ENCODE measurements at regions of chr12 and their contacts with region 1.

Region 1: GRCh38 chr12:49069507-49070346 is at the start of gene RHEBL1:
- DNase-seq: peak; percentile 98 to 99 (median 99)
- H3K4me3 ChIP-seq: peak within 1 kb of the TSS; percentile 93
- H3K4me3 Mint-ChIP-seq: peak within 1 kb of the TSS; percentile 87 to 98 (median 94)
- H3K27ac ChIP-seq: peak within 1 kb of the TSS; percentile 83
- H3K27ac Mint-ChIP-seq: peak within 1 kb of the TSS; percentile 72 to 99 (median 91)
- H3K4me1 ChIP-seq: peaks cover 16% of the 10 kb centered on the region
- H3K4me1 Mint-ChIP-seq: peaks cover 18 to 21% (median 21%) of the 10 kb centered on the region in 3 donors
- H3K27me3 ChIP-seq: no peaks in the 10 kb centered on the region
- H3K27me3 Mint-ChIP-seq: no peaks in the 10 kb centered on the region
- total RNA-seq, gene RHEBL1: 10.1 to 10.2 TPM

Region 2: GRCh38 chr12:48640854-48641253 is 428.9 kb before region 1 on chr12:
- CTCF ChIA-PET with region 1: no interaction called
- POLR2A ChIA-PET with region 1: no interaction called
- DNase-seq: no peak
- H3K4me3 ChIP-seq: no peak overlapping the region
- H3K4me3 Mint-ChIP-seq: no peak overlapping the region
- H3K27ac ChIP-seq: no peak overlapping the region
- H3K27ac Mint-ChIP-seq: no peak overlapping the region
- H3K4me1 ChIP-seq: no peaks in the 10 kb centered on the region
- H3K4me1 Mint-ChIP-seq: no peaks in the 10 kb centered on the region
- H3K27me3 ChIP-seq: no peaks in the 10 kb centered on the region
- H3K27me3 Mint-ChIP-seq: no peaks in the 10 kb centered on the region

Region 3: GRCh38 chr12:49098035-49098451 is 28.3 kb after region 1 on chr12:
- CTCF ChIA-PET with region 1: interaction called, 62 read pairs
- POLR2A ChIA-PET with region 1: interaction called, 12 read pairs
- DNase-seq: peak; percentile 43 to 75 (median 50)
- H3K4me3 ChIP-seq: no peak overlapping the region
- H3K4me3 Mint-ChIP-seq: no peak overlapping the region
- H3K27ac ChIP-seq: no peak overlapping the region
- H3K27ac Mint-ChIP-seq: peak overlapping the region in 2 of 8 donors; percentile 27 to 52
- H3K4me1 ChIP-seq: peaks cover 13% of the 10 kb centered on the region
- H3K4me1 Mint-ChIP-seq: peaks cover 15 to 19% (median 16%) of the 10 kb centered on the region in 3 donors
- H3K27me3 ChIP-seq: peaks cover 18% of the 10 kb centered on the region
- H3K27me3 Mint-ChIP-seq: peaks cover 20 to 21% of the 10 kb centered on the region in 2 donors

Region 4: GRCh38 chr12:49105608-49106007 is 35.9 kb after region 1 on chr12:
- CTCF ChIA-PET with region 1: interaction called, 48 read pairs
- POLR2A ChIA-PET with region 1: interaction called, 12 read pairs
- DNase-seq: no peak
- H3K4me3 ChIP-seq: no peak overlapping the region
- H3K4me3 Mint-ChIP-seq: no peak overlapping the region
- H3K27ac ChIP-seq: no peak overlapping the region
- H3K27ac Mint-ChIP-seq: peak overlapping the region in 1 of 8 donors; percentile 78
- H3K4me1 ChIP-seq: peaks cover 14% of the 10 kb centered on the region
- H3K4me1 Mint-ChIP-seq: peaks cover 31 to 42% (median 35%) of the 10 kb centered on the region in 3 donors
- H3K27me3 ChIP-seq: no peaks in the 10 kb centered on the region
- H3K27me3 Mint-ChIP-seq: no peaks in the 10 kb centered on the region

Region 5: GRCh38 chr12:49232940-49233841 is 163.5 kb after region 1 on chr12:
- CTCF ChIA-PET with region 1: interaction called, 14 read pairs
- POLR2A ChIA-PET with region 1: no interaction called
- DNase-seq: no peak
- H3K4me3 ChIP-seq: no peak overlapping the region
- H3K4me3 Mint-ChIP-seq: peak overlapping the region; percentile 27 to 84 (median 63)
- H3K27ac ChIP-seq: peak overlapping the region; percentile 66
- H3K27ac Mint-ChIP-seq: peak overlapping the region in 3 of 8 donors; percentile 38 to 73 (median 72)
- H3K4me1 ChIP-seq: peaks cover 5% of the 10 kb centered on the region
- H3K4me1 Mint-ChIP-seq: peaks cover 0 to 10% (median 4%) of the 10 kb centered on the region in 3 donors
- H3K27me3 ChIP-seq: no peaks in the 10 kb centered on the region
- H3K27me3 Mint-ChIP-seq: peaks cover 0 to 1% of the 10 kb centered on the region in 2 donors